Endothelial cell of umbilical vein (primary cell): ENCODE measurements at regions of chr3 and their contacts with region 1.

Region 1: GRCh38 chr3:111717601-111718000 is 122.5 kb upstream of the ZBED2 start:
- DNase-seq: peak; percentile 83
- H3K4me3 ChIP-seq: no peak overlapping the region
- H3K27ac ChIP-seq: peak overlapping the region; percentile 18
- H3K4me1 ChIP-seq: peaks cover 6% of the 10 kb centered on the region
- H3K27me3 ChIP-seq: no peaks in the 10 kb centered on the region
- CTCF ChIP-seq: peak; percentile 81 to 82
- POLR2A ChIP-seq: no peak

Region 2: DNA sequence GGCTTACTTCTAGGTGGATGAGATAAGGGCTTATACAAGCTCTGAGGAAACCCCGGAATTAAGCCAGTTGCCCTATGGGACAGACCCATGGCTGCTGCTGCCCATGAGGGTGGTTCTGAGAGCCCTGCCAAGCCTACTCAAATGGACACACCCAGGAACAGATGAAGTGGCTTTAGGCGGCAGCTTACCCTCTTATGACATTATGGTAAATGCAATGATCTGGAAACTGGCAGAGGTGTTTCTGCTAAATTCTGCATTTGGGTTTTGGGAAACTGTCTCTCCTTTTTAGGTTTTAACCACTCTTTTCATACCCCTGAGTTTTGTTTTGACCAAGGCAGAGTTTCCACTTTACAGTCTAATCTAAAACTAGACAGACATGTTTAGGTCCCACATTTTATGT is 113.5 kb before region 1 on chr3:
- CTCF ChIA-PET with region 1: no interaction called
- POLR2A ChIA-PET with region 1: no interaction called
- dilution Hi-C with region 1: no loop called
- intact Hi-C with region 1: no loop called
- DNase-seq: no peak
- H3K4me3 ChIP-seq: no peak overlapping the region
- H3K27ac ChIP-seq: no peak overlapping the region
- H3K4me1 ChIP-seq: no peaks in the 10 kb centered on the region
- H3K27me3 ChIP-seq: peaks cover 4 to 5% of the 10 kb centered on the region in 2 experiments
- CTCF ChIP-seq: no peak
- POLR2A ChIP-seq: no peak

Region 3: DNA sequence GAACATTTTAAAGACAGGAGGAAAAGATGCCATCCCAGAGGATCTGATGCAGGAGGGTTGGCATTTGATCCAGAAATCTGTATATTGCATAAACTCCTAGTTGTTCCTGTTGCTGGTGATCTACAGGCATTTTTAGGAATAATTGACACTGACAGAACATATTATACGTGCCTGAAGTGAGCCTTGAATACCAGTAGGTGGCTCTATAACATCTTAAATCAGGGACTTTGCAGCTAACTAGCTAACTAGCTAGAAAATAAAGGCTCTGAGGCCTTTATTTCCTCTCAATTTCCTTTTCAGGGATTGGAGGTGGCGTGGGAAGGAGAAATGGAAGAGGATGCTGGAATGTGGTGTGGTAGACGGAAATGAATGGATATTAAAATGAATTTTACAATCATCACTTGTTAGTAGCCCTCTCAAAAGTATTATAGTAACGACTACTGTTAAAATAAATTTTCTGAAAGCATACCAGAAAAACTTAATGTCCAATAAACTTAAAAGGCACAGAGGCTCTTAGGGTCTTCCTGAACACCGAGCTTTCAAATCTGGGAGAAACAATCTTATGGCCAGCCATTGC is 48.6 kb before region 1 on chr3:
- CTCF ChIA-PET with region 1: no interaction called
- POLR2A ChIA-PET with region 1: interaction called, 3 read pairs
- dilution Hi-C with region 1: no loop called
- intact Hi-C with region 1: loop called (anchors 1 kb)
- DNase-seq: peak; percentile 63
- H3K4me3 ChIP-seq: no peak overlapping the region
- H3K27ac ChIP-seq: peak overlapping the region; percentile 29
- H3K4me1 ChIP-seq: peaks cover 31% of the 10 kb centered on the region
- H3K27me3 ChIP-seq: no peaks in the 10 kb centered on the region
- CTCF ChIP-seq: peak; percentile 61
- POLR2A ChIP-seq: no peak

Region 4: DNA sequence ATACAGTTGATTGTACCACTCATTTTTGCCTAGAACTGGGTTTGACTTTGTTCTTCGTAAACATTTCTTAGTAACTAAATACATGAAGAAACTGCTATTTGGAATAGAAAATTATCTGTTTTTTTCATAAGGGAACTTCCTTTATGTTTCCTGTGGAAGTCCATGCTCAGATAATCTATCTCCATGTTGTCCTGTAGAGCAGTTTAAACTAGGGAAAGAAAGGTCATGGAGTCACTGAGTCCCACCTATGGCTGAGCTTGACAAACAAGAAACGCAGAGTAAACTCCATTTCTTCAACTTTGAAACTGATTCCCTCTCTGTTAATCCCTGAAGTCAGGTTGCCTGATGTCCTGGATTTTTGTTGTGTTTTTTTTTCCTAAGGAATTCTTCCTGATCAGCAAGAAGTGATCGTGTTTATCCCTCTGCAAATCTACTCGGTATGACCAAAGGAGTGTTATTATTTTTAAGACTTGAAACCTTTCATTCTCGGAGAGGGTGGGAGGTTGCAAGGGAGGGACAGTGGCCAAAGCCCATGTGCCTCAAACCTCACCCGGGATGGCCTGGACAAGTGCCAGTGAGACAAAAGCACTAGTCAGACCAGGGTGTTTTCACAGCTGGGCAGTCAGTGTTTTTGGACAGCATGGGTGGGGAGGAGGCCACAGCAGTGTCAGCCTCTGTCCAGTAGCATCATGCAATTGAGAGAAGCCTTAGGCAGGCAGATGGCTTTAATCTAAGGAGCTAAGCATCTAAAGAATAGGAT is 11.7 kb after region 1 on chr3:
- CTCF ChIA-PET with region 1: interaction called, 13 read pairs
- POLR2A ChIA-PET with region 1: no interaction called
- dilution Hi-C with region 1: no loop called
- intact Hi-C with region 1: no loop called
- DNase-seq: peak; percentile 56
- H3K4me3 ChIP-seq: no peak overlapping the region
- H3K27ac ChIP-seq: no peak overlapping the region
- H3K4me1 ChIP-seq: peaks cover 12% of the 10 kb centered on the region
- H3K27me3 ChIP-seq: no peaks in the 10 kb centered on the region
- CTCF ChIP-seq: no peak
- POLR2A ChIP-seq: no peak

Region 5: DNA sequence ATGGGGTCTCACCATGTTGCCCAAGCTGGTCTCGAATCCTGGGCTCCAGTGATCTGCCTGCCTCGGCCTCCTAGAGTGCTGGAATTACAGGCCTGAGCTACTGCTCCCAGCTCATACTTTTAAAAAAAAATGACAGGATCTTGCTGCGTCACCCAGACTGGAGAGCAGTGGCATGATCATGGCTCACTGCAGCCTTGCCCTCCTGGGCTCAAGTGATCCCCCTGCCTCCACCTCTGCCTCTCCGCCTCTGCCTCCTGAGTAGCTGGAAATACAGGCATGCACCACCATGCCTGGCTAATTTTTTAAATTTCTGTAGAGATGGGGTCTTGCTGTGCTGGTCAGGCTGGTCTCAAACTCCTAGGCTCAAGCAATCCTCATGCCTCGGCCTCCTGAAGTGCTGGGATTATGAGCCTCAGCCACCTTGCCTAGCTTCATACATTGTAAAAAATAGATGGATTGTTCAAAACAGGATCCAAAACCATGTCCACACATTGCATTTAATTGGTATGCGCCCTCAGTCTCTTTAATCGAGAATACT is 150.4 kb after region 1 on chr3:
- CTCF ChIA-PET with region 1: interaction called, 424 read pairs
- POLR2A ChIA-PET with region 1: no interaction called
- dilution Hi-C with region 1: no loop called
- intact Hi-C with region 1: loop called (anchors 1 kb)
- DNase-seq: no peak
- H3K4me3 ChIP-seq: no peak overlapping the region
- H3K27ac ChIP-seq: no peak overlapping the region
- H3K4me1 ChIP-seq: peaks cover 36% of the 10 kb centered on the region
- H3K27me3 ChIP-seq: no peaks in the 10 kb centered on the region
- CTCF ChIP-seq: no peak
- POLR2A ChIP-seq: no peak

Region 6: DNA sequence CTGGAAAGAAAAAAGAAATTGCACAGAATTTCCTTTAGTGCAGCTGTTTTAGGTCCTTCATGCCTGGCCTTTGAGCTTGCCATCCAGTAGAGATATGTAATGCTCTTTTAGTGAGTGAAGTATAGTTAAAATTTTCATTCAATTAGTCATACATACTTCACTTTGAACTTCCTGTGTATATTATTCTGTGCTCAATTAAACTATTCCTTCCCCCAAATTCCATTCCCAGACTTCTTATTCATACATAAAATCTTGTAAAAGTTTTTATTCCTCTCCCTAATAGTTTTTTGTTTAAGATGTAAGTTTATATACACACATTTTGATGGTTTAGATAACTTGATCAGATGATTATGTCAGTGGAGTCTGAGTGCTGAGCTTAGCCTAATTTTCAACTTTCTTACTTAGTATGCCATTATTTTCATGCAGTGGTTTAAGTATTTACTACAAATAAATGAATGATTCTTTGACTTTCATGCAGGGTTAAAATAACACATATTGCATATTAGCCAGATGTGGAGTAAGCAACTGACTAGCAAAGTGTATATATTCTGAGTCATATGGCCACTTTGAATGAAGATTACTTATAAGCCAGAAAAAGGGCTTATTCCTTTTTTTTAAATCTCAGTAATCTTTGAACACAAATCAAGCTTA is 218.7 kb after region 1 on chr3:
- CTCF ChIA-PET with region 1: interaction called, 11 read pairs
- POLR2A ChIA-PET with region 1: interaction called, 3 read pairs
- dilution Hi-C with region 1: no loop called
- intact Hi-C with region 1: no loop called
- DNase-seq: peak; percentile 84
- H3K4me3 ChIP-seq: peak overlapping the region in 2 of 3 experiments; percentile 15 to 28
- H3K27ac ChIP-seq: peak overlapping the region; percentile 99
- H3K4me1 ChIP-seq: peaks cover 70% of the 10 kb centered on the region
- H3K27me3 ChIP-seq: no peaks in the 10 kb centered on the region
- CTCF ChIP-seq: no peak
- POLR2A ChIP-seq: no peak

Region 7: DNA sequence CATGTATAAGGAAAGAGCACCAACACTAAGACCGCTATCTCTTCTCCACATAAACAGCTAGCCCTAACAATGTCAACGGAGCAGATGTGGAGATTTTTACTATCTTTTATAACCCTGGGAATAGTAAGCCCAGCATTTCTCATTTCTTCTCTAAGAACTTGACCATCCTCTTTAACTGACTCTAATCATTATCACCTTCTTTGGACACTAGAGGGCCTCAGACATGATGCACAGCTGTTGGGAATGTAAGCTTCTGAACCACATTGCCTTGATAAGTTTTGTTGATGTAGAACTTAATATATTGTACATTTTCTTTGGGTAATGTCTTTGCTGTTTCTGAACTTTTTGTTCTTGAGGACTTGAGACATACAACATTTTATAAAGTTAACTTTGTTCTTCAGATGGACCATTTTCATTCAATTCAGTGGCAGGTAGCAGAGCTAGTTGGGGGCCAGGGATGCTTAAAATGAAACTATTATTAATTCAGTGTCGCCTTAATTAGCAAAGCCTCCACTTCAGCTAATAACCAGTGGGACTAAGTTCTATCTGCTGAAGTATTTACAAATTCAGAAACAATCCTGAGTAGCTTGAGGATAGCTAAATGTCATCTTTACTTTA is 271.6 kb after region 1 on chr3:
- CTCF ChIA-PET with region 1: interaction called, 16 read pairs
- POLR2A ChIA-PET with region 1: interaction called, 3 read pairs
- dilution Hi-C with region 1: no loop called
- intact Hi-C with region 1: no loop called
- DNase-seq: peak; percentile 72
- H3K4me3 ChIP-seq: no peak overlapping the region
- H3K27ac ChIP-seq: no peak overlapping the region
- H3K4me1 ChIP-seq: no peaks in the 10 kb centered on the region
- H3K27me3 ChIP-seq: no peaks in the 10 kb centered on the region
- CTCF ChIP-seq: peak; percentile 55 to 60
- POLR2A ChIP-seq: no peak